ENCODE measurements at regions of chr5 and their contacts with region 1.

Region 1: DNA sequence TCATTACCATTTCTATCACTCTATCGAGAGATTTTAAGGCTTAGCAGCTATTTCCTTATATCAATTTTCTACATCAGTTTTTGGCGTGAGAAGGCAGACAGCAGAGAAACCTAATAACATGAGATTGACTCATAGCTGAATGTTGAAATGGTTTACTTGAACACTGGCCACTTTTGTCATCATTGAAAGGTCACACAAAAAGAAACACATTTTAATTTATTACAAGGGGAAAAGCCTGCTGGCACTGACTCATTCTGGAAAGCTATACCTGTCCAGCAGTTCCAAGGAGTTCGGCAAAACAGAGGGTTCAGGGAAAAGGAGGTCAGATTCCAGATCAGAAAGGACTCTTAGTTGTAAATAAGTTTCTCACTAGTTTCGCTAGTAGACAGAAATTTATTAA is 566.4 kb downstream of the DNAH5 start:
- DNase-seq: peak in 1 of 2 experiments; percentile 74
- H3K4me3 ChIP-seq: no peak overlapping the region
- H3K27ac ChIP-seq: peak overlapping the region; percentile 48
- H3K4me1 ChIP-seq: peaks cover 25% of the 10 kb centered on the region
- H3K27me3 ChIP-seq: no peaks in the 10 kb centered on the region
- CTCF ChIP-seq: no peak

Region 2: GRCh38 chr5:13278148-13278547 is 99.9 kb before region 1 on chr5:
- CTCF ChIA-PET with region 1: no interaction called
- POLR2A ChIA-PET with region 1: no interaction called
- intact Hi-C with region 1: no loop called
- DNase-seq: no peak
- H3K4me3 ChIP-seq: no peak overlapping the region
- H3K27ac ChIP-seq: no peak overlapping the region
- H3K4me1 ChIP-seq: no peaks in the 10 kb centered on the region
- H3K27me3 ChIP-seq: no peaks in the 10 kb centered on the region
- CTCF ChIP-seq: peak; percentile 72

Region 3: DNA sequence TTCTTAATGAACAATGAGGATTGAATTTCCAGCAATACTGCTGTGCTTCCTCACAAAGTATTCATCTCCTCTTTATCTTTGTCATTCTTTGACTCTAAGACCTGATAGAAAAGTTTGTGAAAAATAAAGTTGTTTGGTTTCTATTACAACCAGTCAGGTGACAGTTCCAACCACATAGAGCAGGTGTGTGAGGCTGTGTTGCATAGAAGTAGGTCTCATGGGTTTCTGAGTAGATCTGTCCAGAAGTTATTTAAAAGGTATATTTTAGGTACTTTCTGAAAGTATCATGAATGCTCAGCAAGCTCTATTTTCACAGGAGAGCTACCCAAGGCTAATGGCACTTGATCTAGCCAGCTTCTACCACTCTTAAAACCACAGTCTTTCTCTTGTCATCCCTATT is 70.6 kb before region 1 on chr5:
- CTCF ChIA-PET with region 1: no interaction called
- POLR2A ChIA-PET with region 1: no interaction called
- intact Hi-C with region 1: loop called (anchors 5 kb)
- DNase-seq: no peak
- H3K4me3 ChIP-seq: no peak overlapping the region
- H3K27ac ChIP-seq: no peak overlapping the region
- H3K4me1 ChIP-seq: no peaks in the 10 kb centered on the region
- H3K27me3 ChIP-seq: no peaks in the 10 kb centered on the region
- CTCF ChIP-seq: no peak

Region 4: GRCh38 chr5:13359326-13359725 is 18.8 kb before region 1 on chr5:
- CTCF ChIA-PET with region 1: no interaction called
- POLR2A ChIA-PET with region 1: no interaction called
- intact Hi-C with region 1: loop called (anchors 1 kb)
- DNase-seq: no peak
- H3K4me3 ChIP-seq: no peak overlapping the region
- H3K27ac ChIP-seq: no peak overlapping the region
- H3K4me1 ChIP-seq: peaks cover 10% of the 10 kb centered on the region
- H3K27me3 ChIP-seq: no peaks in the 10 kb centered on the region
- CTCF ChIP-seq: no peak

Region 5: GRCh38 chr5:13625616-13626198 is 247.6 kb after region 1 on chr5:
- CTCF ChIA-PET with region 1: no interaction called
- POLR2A ChIA-PET with region 1: no interaction called
- intact Hi-C with region 1: no loop called
- DNase-seq: no peak
- H3K4me3 ChIP-seq: no peak overlapping the region
- H3K27ac ChIP-seq: no peak overlapping the region
- H3K4me1 ChIP-seq: peaks cover 17% of the 10 kb centered on the region
- H3K27me3 ChIP-seq: no peaks in the 10 kb centered on the region
- CTCF ChIP-seq: no peak

Region 6: DNA sequence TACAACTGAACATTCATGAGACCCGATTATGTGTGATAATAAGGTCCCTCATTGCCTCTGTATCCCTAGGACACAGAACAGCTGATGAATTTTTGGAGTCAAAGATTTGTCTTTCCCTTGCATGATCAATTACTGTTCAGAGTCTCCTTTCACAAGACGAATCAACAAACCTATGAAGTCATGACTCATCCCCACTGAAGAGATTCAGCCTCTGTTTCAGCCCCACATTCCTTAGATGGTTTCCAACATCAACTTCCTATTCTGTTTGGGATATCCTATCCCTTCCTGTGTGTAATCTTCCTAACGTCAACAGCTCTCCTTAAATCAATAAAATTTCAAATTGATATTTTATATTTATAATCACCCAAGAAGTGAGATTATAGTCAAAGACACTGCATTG is 367.4 kb after region 1 on chr5:
- CTCF ChIA-PET with region 1: no interaction called
- POLR2A ChIA-PET with region 1: no interaction called
- intact Hi-C with region 1: no loop called
- DNase-seq: no peak
- H3K4me3 ChIP-seq: no peak overlapping the region
- H3K27ac ChIP-seq: no peak overlapping the region
- H3K4me1 ChIP-seq: no peaks in the 10 kb centered on the region
- H3K27me3 ChIP-seq: no peaks in the 10 kb centered on the region
- CTCF ChIP-seq: no peak

Measured in PC-9 (cell line).